ENCODE measurements at regions of chr1 and their contacts with region 1.

Region 1: GRCh38 chr1:205711104-205712020 is 31.1 kb upstream of the SLC45A3 start:
- DNase-seq: peak; percentile 62
- ATAC-seq: peak; percentile 99
- H3K4me3 ChIP-seq: no peak overlapping the region
- H3K27ac ChIP-seq: no peak overlapping the region
- H3K4me1 ChIP-seq: no peaks in the 10 kb centered on the region
- H3K27me3 ChIP-seq: no peaks in the 10 kb centered on the region
- CTCF ChIP-seq: peak; percentile 77 to 95 (median 92)
- EP300 ChIP-seq: no peak
- POLR2A ChIP-seq: no peak
- RAD21 ChIP-seq: peak; percentile 91

Region 2: GRCh38 chr1:204842892-204843291 is 868.5 kb before region 1 on chr1:
- CTCF ChIA-PET with region 1: no interaction called
- POLR2A ChIA-PET with region 1: no interaction called
- RAD21 ChIA-PET with region 1: no interaction called
- SMC1A ChIA-PET with region 1: no interaction called
- in situ Hi-C with region 1: no loop called
- intact Hi-C with region 1: no loop called
- DNase-seq: no peak
- ATAC-seq: no peak
- H3K4me3 ChIP-seq: no peak overlapping the region
- H3K27ac ChIP-seq: no peak overlapping the region
- H3K4me1 ChIP-seq: no peaks in the 10 kb centered on the region
- H3K27me3 ChIP-seq: peaks cover 0 to 2% of the 10 kb centered on the region in 2 experiments; a peak in 2 of 4 replicates
- CTCF ChIP-seq: no peak
- EP300 ChIP-seq: no peak
- POLR2A ChIP-seq: no peak
- RAD21 ChIP-seq: no peak

Region 3: DNA sequence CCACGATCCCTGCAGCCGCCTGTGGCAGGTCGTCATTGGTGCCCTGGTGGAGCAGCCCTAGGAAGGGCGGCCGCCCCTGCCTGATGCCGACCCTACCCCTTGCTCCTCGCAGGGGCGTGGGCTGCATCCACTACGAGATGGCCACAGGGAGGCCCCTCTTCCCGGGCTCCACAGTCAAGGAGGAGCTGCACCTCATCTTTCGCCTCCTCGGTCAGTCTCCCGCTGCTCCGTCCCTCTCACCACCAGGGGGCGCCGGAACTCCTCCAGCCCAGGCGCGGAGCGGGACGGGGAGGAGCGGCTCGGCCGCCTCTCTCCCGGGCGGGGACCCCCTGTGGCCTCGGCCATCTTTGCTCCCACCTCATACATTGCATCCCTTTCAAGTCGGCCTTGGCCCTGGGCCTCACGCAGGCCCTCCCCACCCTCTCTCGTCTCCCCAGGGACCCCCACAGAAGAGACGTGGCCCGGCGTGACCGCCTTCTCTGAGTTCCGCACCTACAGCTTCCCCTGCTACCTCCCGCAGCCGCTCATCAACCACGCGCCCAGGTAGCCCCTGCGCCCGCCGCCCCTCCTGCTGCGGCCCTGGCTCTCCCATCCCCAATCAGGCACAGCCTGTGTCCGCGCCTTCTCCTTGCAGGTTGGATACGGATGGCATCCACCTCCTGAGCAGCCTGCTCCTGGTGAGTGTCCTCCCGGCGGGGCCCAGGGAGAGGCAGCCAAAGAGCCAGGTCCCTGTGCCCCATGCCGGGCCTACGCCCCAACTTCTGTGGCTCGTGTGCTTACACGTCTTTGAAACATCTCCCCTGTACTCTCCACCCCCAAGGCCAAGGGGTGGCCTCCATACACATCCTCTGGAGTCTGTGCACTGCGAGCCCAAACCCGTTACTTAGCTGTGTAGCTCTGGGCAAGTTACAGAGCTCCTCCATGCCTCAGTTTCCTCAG is 182.2 kb before region 1 on chr1:
- CTCF ChIA-PET with region 1: interaction called, 15 read pairs
- POLR2A ChIA-PET with region 1: no interaction called
- RAD21 ChIA-PET with region 1: interaction called, 7 read pairs
- SMC1A ChIA-PET with region 1: interaction called, 7 read pairs
- in situ Hi-C with region 1: no loop called
- intact Hi-C with region 1: loop called (anchors 1 kb)
- DNase-seq: no peak
- ATAC-seq: peak; percentile 93
- H3K4me3 ChIP-seq: no peak overlapping the region
- H3K27ac ChIP-seq: no peak overlapping the region
- H3K4me1 ChIP-seq: no peaks in the 10 kb centered on the region
- H3K27me3 ChIP-seq: peaks cover 2 to 3% of the 10 kb centered on the region in 2 experiments; a peak in 3 of 4 replicates
- CTCF ChIP-seq: peak; percentile 78 to 96 (median 92)
- EP300 ChIP-seq: no peak
- POLR2A ChIP-seq: no peak
- RAD21 ChIP-seq: peak; percentile 78

Region 4: GRCh38 chr1:205631727-205632373 is 79.5 kb before region 1 on chr1 and contains the start of gene ELK4:
- CTCF ChIA-PET with region 1: interaction called, 19 read pairs
- POLR2A ChIA-PET with region 1: interaction called, 3 read pairs
- RAD21 ChIA-PET with region 1: interaction called, 12 read pairs
- SMC1A ChIA-PET with region 1: interaction called, 11 read pairs
- in situ Hi-C with region 1: no loop called
- intact Hi-C with region 1: no loop called
- DNase-seq: peak; percentile 87
- ATAC-seq: peak; percentile 73
- H3K4me3 ChIP-seq: peak within 1 kb of the TSS; percentile 93
- H3K27ac ChIP-seq: peak within 1 kb of the TSS; percentile 74
- H3K4me1 ChIP-seq: peaks cover 13% of the 10 kb centered on the region
- H3K27me3 ChIP-seq: no peaks in the 10 kb centered on the region
- CTCF ChIP-seq: peak; percentile 70 to 98 (median 86); a peak in 5 of 6 replicates
- EP300 ChIP-seq: no peak; a peak in 1 of 4 replicates
- POLR2A ChIP-seq: peak; percentile 93
- RAD21 ChIP-seq: peak; percentile 79
- polyA plus RNA-seq, gene ELK4: 5.2 to 11.9 TPM

Region 5: GRCh38 chr1:205680073-205680851 is 31.1 kb before region 1 on chr1 and contains the start of gene SLC45A3:
- CTCF ChIA-PET with region 1: interaction called, 1,339 read pairs
- POLR2A ChIA-PET with region 1: interaction called, 21 read pairs
- RAD21 ChIA-PET with region 1: interaction called, 36 read pairs
- SMC1A ChIA-PET with region 1: interaction called, 1,008 read pairs
- in situ Hi-C with region 1: no loop called
- intact Hi-C with region 1: no loop called
- DNase-seq: no peak
- ATAC-seq: peak; percentile 85
- H3K4me3 ChIP-seq: peak within 1 kb of the TSS; percentile 77
- H3K27ac ChIP-seq: no peak within 1 kb of the TSS
- H3K4me1 ChIP-seq: peaks cover 9% of the 10 kb centered on the region
- H3K27me3 ChIP-seq: peaks cover 0 to 4% of the 10 kb centered on the region in 2 experiments; a peak in 1 of 4 replicates
- CTCF ChIP-seq: no peak
- EP300 ChIP-seq: no peak
- POLR2A ChIP-seq: no peak
- RAD21 ChIP-seq: no peak
- polyA plus RNA-seq, gene SLC45A3: 0.26 to 0.60 TPM

Region 6: DNA sequence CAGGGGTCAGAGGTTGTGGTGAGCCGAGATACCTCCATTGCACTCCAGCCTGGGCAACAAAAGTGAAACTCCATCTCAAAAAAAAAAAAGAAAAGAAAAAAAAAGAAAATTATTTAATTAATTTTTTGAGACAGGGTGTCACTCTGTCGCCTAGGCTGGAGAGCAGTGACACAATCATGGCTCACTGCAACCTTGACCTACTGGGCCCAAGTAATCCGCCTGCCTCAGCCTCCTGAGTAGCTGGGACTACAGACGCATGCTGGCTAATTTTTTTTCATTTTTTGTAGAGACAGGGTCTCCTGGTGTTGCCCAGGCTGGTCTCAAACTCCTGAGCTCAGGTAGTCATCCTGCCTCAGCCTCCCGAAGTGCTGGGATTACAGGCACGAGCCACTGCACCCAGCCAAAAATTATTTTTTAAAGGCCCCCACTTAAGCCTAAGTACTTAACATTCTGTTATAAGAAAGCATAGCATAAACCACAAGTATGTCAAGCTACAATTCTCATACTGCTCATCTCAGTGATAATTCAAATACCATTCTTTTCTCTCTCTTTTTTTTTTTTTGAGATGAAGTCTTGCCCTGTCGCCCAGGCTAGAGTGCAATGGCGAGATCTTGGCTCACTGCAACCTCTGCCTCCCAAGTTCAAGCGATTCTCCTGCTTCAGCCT is 18.7 kb after region 1 on chr1:
- CTCF ChIA-PET with region 1: interaction called, 59 read pairs
- POLR2A ChIA-PET with region 1: no interaction called
- RAD21 ChIA-PET with region 1: interaction called, 3 read pairs
- SMC1A ChIA-PET with region 1: interaction called, 69 read pairs
- in situ Hi-C with region 1: no loop called
- intact Hi-C with region 1: no loop called
- DNase-seq: no peak
- ATAC-seq: no peak
- H3K4me3 ChIP-seq: no peak overlapping the region
- H3K27ac ChIP-seq: no peak overlapping the region
- H3K4me1 ChIP-seq: no peaks in the 10 kb centered on the region
- H3K27me3 ChIP-seq: no peaks in the 10 kb centered on the region
- CTCF ChIP-seq: no peak
- EP300 ChIP-seq: no peak
- POLR2A ChIP-seq: no peak
- RAD21 ChIP-seq: no peak

Region 7: GRCh38 chr1:205750138-205751035 is 39.0 kb after region 1 on chr1 and contains the start of gene NUCKS1:
- CTCF ChIA-PET with region 1: interaction called, 9 read pairs
- POLR2A ChIA-PET with region 1: interaction called, 10 read pairs
- RAD21 ChIA-PET with region 1: interaction called, 15 read pairs
- SMC1A ChIA-PET with region 1: interaction called, 22 read pairs
- in situ Hi-C with region 1: no loop called
- intact Hi-C with region 1: no loop called
- DNase-seq: peak; percentile 93
- ATAC-seq: peak; percentile 87
- H3K4me3 ChIP-seq: peak within 1 kb of the TSS; percentile 90
- H3K27ac ChIP-seq: peak within 1 kb of the TSS; percentile 99
- H3K4me1 ChIP-seq: peaks cover 4% of the 10 kb centered on the region
- H3K27me3 ChIP-seq: no peaks in the 10 kb centered on the region
- CTCF ChIP-seq: no peak
- EP300 ChIP-seq: peak in 1 of 2 experiments; percentile 98; a peak in 2 of 4 replicates
- POLR2A ChIP-seq: no peak
- RAD21 ChIP-seq: no peak
- polyA plus RNA-seq, gene NUCKS1: 40.5 to 41.7 TPM

Region 8: DNA sequence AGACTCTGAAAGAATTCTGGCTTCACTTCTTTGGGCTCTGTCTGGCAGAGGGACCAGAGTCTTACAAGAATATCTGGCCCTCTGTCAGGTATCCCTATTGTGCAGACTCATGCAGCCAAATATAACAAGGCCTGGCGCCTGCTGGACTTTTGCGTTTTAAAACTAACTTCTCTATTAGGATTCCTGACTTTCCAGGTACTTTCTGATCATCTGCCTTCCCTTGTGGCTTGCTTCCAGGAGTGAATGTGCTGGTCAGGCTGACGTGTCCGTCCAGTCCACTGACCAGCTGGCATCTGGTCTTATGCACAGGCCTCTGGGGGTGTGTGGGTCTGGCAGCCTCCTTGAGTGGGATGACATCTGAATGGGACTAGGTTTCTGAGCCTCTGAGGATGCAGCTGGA is 72.5 kb after region 1 on chr1:
- CTCF ChIA-PET with region 1: interaction called, 13 read pairs
- POLR2A ChIA-PET with region 1: no interaction called
- RAD21 ChIA-PET with region 1: interaction called, 10 read pairs
- SMC1A ChIA-PET with region 1: interaction called, 4 read pairs
- in situ Hi-C with region 1: no loop called
- intact Hi-C with region 1: no loop called
- DNase-seq: no peak
- ATAC-seq: no peak
- H3K4me3 ChIP-seq: no peak overlapping the region
- H3K27ac ChIP-seq: no peak overlapping the region
- H3K4me1 ChIP-seq: no peaks in the 10 kb centered on the region
- H3K27me3 ChIP-seq: peaks cover 0 to 6% of the 10 kb centered on the region in 2 experiments; a peak in 1 of 4 replicates
- CTCF ChIP-seq: no peak
- EP300 ChIP-seq: no peak
- POLR2A ChIP-seq: no peak
- RAD21 ChIP-seq: no peak

Region 9: GRCh38 chr1:205840146-205840923 is 129.0 kb after region 1 on chr1:
- CTCF ChIA-PET with region 1: no interaction called
- POLR2A ChIA-PET with region 1: no interaction called
- RAD21 ChIA-PET with region 1: no interaction called
- SMC1A ChIA-PET with region 1: no interaction called
- in situ Hi-C with region 1: no loop called
- intact Hi-C with region 1: no loop called
- DNase-seq: no peak
- ATAC-seq: no peak; the same call in 2 of the 3 replicates
- H3K4me3 ChIP-seq: no peak overlapping the region
- H3K27ac ChIP-seq: no peak overlapping the region
- H3K4me1 ChIP-seq: no peaks in the 10 kb centered on the region
- H3K27me3 ChIP-seq: no peaks in the 10 kb centered on the region; a peak in 1 of 4 replicates
- CTCF ChIP-seq: no peak
- EP300 ChIP-seq: no peak
- POLR2A ChIP-seq: no peak
- RAD21 ChIP-seq: no peak

Measured in GM12878 (cell line).